ENCODE measurements at regions of chr6 and their contacts with region 1.

Region 1: DNA sequence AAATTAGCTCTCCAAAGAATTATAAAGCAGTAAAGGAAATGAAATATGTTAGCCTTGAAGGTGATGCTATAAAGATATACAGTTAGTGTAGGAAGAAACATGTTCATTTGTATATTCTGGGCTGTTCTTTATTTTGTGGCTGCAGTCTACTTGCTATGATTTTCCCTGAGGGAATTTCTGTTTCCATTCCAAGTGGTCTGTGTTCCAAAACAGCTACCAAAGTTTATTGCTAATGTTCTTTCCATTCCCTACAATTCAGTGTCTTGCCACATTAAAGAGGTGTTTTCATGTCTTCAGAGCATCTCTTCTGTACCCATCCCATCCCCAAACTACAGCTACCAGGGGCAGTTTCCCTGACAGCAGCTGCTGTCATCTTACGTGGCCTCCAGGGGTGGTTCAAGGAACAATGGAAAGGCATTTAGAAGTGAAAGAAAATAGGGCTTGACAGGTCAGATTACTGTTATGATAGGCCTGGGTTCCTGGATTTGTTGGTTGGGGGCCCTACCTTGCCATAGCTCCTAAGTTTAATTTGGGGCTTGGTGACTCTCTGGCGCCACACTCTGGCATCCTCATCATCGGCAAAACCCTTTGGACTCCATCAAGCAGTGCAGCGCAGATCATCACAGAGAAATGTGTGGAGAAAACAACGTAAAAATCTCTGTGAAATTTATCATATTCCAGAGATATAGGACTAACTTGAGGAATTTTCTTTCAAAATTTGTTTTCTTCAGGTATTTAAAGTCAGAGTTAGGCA is 33.8 kb upstream of the AIG1 start:
- DNase-seq: peak; percentile 69
- ATAC-seq: peak; percentile 39
- H3K4me3 ChIP-seq: no peak overlapping the region
- H3K4me3 Mint-ChIP-seq: no peak overlapping the region
- H3K27ac ChIP-seq: no peak overlapping the region
- H3K27ac Mint-ChIP-seq: no peak overlapping the region
- H3K4me1 ChIP-seq: no peaks in the 10 kb centered on the region
- H3K4me1 Mint-ChIP-seq: peaks cover 3% of the 10 kb centered on the region
- H3K27me3 ChIP-seq: no peaks in the 10 kb centered on the region
- H3K27me3 Mint-ChIP-seq: no peaks in the 10 kb centered on the region
- CTCF ChIP-seq: peak; percentile 74

Region 2: GRCh38 chr6:142474531-142475289 is 552.2 kb before region 1 on chr6:
- CTCF ChIA-PET with region 1: interaction called, 11 read pairs
- POLR2A ChIA-PET with region 1: no interaction called
- intact Hi-C with region 1: loop called (anchors 2 kb)
- DNase-seq: peak; percentile 48
- ATAC-seq: no peak
- H3K4me3 ChIP-seq: no peak overlapping the region
- H3K4me3 Mint-ChIP-seq: no peak overlapping the region
- H3K27ac ChIP-seq: no peak overlapping the region
- H3K27ac Mint-ChIP-seq: no peak overlapping the region
- H3K4me1 ChIP-seq: no peaks in the 10 kb centered on the region
- H3K4me1 Mint-ChIP-seq: no peaks in the 10 kb centered on the region
- H3K27me3 ChIP-seq: peaks cover 0 to 3% (median 0%) of the 10 kb centered on the region in 4 experiments
- H3K27me3 Mint-ChIP-seq: peaks cover 7% of the 10 kb centered on the region
- CTCF ChIP-seq: peak; percentile 96

Region 3: GRCh38 chr6:142746524-142746923 is 280.3 kb before region 1 on chr6:
- CTCF ChIA-PET with region 1: interaction called, 15 read pairs
- POLR2A ChIA-PET with region 1: no interaction called
- intact Hi-C with region 1: loop called (anchors 1 kb)
- DNase-seq: peak; percentile 70
- ATAC-seq: peak; percentile 56
- H3K4me3 ChIP-seq: no peak overlapping the region
- H3K4me3 Mint-ChIP-seq: no peak overlapping the region
- H3K27ac ChIP-seq: no peak overlapping the region
- H3K27ac Mint-ChIP-seq: no peak overlapping the region
- H3K4me1 ChIP-seq: peaks cover 0 to 5% of the 10 kb centered on the region in 2 donors
- H3K4me1 Mint-ChIP-seq: peaks cover 17% of the 10 kb centered on the region
- H3K27me3 ChIP-seq: no peaks in the 10 kb centered on the region
- H3K27me3 Mint-ChIP-seq: no peaks in the 10 kb centered on the region
- CTCF ChIP-seq: peak; percentile 69

Region 4: DNA sequence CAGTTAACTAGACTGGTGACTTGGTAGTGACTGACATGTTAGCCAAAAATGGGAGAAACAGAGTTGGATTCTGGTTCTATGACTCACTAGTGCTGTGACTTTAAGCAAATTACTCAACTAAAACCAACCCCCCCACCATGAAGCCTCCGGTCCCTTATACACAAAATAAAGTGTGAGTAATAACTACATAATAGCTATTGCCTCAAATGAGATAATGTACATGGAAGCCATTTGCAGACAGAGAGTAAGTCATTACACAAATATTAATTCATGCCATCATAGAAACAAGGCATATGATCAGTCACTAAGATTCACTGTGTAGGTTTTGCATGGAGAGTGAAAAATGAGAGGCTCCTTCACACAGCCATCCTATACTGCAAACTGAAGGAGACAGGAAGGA is 193.8 kb before region 1 on chr6:
- CTCF ChIA-PET with region 1: no interaction called
- POLR2A ChIA-PET with region 1: no interaction called
- intact Hi-C with region 1: loop called (anchors 10 kb)
- DNase-seq: no peak
- ATAC-seq: no peak
- H3K4me3 ChIP-seq: no peak overlapping the region
- H3K4me3 Mint-ChIP-seq: no peak overlapping the region
- H3K27ac ChIP-seq: no peak overlapping the region
- H3K27ac Mint-ChIP-seq: peak overlapping the region; percentile 32
- H3K4me1 ChIP-seq: peaks cover 0 to 10% of the 10 kb centered on the region in 2 donors
- H3K4me1 Mint-ChIP-seq: peaks cover 38% of the 10 kb centered on the region
- H3K27me3 ChIP-seq: no peaks in the 10 kb centered on the region
- H3K27me3 Mint-ChIP-seq: no peaks in the 10 kb centered on the region
- CTCF ChIP-seq: no peak

Region 5: DNA sequence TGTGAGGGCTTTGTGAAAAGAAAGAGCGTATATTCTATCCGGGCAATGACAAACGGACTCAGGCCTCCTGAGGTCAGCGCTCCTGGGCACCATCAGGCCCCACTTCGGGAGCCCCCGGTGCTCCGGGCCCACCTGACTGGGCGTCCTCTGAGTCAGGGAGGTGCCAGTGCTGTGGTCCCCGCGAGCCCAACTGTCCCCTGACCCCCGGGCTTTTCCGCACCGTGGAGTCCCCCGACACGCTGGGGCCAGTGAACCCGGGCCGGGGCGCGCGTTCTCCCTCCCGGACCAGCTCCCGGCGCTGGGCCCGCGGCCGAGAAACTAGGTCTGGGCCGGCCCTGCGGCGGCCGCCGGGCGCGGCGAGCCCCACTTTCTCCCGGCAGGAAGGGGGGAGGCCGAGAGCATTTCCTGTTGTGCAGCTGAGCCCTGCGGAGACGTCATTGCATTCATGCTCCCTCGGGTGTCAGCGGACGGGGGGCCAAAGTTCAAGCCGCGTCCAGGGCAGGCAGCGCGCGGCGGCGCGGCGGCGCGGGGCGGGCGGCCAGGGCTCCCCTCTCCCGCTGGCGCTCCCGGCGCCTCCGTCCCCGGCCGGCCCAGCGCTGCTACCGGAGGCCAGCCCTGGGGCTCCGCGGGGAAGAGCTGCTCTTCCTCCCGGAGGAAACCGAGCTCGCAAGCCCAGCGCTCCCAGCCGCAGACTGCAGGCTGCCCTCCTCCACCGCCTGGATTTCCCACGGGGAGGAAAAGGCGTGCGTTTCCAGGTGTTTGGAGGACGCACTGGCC is 100.2 kb before region 1 on chr6:
- CTCF ChIA-PET with region 1: interaction called, 8 read pairs
- POLR2A ChIA-PET with region 1: no interaction called
- intact Hi-C with region 1: loop called (anchors 5 kb)
- DNase-seq: peak; percentile 88
- ATAC-seq: peak; percentile 92
- H3K4me3 ChIP-seq: peak overlapping the region; percentile 46 to 94 (median 75)
- H3K4me3 Mint-ChIP-seq: peak overlapping the region; percentile 98
- H3K27ac ChIP-seq: peak overlapping the region; percentile 98
- H3K27ac Mint-ChIP-seq: peak overlapping the region; percentile 96
- H3K4me1 ChIP-seq: peaks cover 16 to 37% of the 10 kb centered on the region in 2 donors
- H3K4me1 Mint-ChIP-seq: peaks cover 49% of the 10 kb centered on the region
- H3K27me3 ChIP-seq: no peaks in the 10 kb centered on the region
- H3K27me3 Mint-ChIP-seq: no peaks in the 10 kb centered on the region
- CTCF ChIP-seq: no peak

Region 6: GRCh38 chr6:142952614-142953013 is 74.3 kb before region 1 on chr6:
- CTCF ChIA-PET with region 1: interaction called, 10 read pairs
- POLR2A ChIA-PET with region 1: no interaction called
- intact Hi-C with region 1: loop called (anchors 5 kb)
- DNase-seq: peak; percentile 87
- ATAC-seq: peak; percentile 81
- H3K4me3 ChIP-seq: no peak overlapping the region
- H3K4me3 Mint-ChIP-seq: peak overlapping the region; percentile 40
- H3K27ac ChIP-seq: peak overlapping the region; percentile 47 to 65
- H3K27ac Mint-ChIP-seq: peak overlapping the region; percentile 66
- H3K4me1 ChIP-seq: peaks cover 27 to 30% of the 10 kb centered on the region in 2 donors
- H3K4me1 Mint-ChIP-seq: peaks cover 43% of the 10 kb centered on the region
- H3K27me3 ChIP-seq: no peaks in the 10 kb centered on the region
- H3K27me3 Mint-ChIP-seq: no peaks in the 10 kb centered on the region
- CTCF ChIP-seq: no peak

Region 7: GRCh38 chr6:143427109-143427817 is 400.4 kb after region 1 on chr6:
- CTCF ChIA-PET with region 1: interaction called, 12 read pairs
- POLR2A ChIA-PET with region 1: no interaction called
- intact Hi-C with region 1: loop called (anchors 1 kb)
- DNase-seq: peak; percentile 75
- ATAC-seq: peak; percentile 100
- H3K4me3 ChIP-seq: no peak overlapping the region
- H3K4me3 Mint-ChIP-seq: no peak overlapping the region
- H3K27ac ChIP-seq: no peak overlapping the region
- H3K27ac Mint-ChIP-seq: no peak overlapping the region
- H3K4me1 ChIP-seq: no peaks in the 10 kb centered on the region
- H3K4me1 Mint-ChIP-seq: peaks cover 2% of the 10 kb centered on the region
- H3K27me3 ChIP-seq: no peaks in the 10 kb centered on the region
- H3K27me3 Mint-ChIP-seq: no peaks in the 10 kb centered on the region
- CTCF ChIP-seq: peak; percentile 98

Measured in B cell (primary cell).